B cell (primary cell): ENCODE measurements at regions of chr9 and their contacts with region 1.

Region 1: DNA sequence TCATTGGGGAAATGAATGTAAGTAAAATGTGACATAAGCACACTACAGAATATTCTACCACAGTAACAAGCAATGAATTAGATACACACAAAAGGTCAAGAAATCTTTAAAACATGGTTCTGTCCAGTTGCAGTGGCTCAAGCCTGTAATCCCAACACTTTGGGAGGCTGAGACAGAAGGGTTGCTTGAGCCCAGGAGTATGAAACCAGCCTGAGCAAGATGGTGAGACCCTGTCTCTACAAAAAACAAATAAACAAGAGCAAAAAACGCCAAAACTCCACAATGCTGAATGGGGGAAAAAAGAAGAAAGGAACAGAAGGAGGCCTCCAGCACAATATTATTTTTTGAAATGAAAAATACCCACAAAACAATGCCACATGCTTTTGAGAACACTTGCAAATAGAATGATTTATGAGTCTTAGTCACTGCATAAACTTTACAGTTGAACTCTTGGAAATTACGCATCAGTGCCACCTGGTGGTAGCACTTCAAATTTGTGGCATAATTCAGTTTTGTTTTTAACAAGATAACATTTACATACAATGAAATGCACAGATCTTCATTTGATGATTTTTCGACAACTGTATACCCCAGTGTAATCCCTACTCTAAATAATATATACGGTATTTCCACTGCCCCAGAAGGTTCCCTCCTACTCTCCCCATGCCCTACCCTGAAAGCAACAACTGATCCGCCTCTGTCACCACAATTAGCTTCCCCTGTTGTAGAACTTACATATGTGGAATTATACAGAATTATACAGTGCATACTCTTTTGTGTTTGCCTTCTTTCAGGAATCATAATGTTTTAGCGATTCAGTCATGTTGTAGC is 14.4 kb upstream of the SPINK4 start:
- DNase-seq: peak; percentile 82
- ATAC-seq: peak; percentile 44
- H3K4me3 ChIP-seq: no peak overlapping the region
- H3K4me3 Mint-ChIP-seq: no peak overlapping the region
- H3K27ac ChIP-seq: no peak overlapping the region
- H3K27ac Mint-ChIP-seq: no peak overlapping the region
- H3K4me1 ChIP-seq: peaks cover 35 to 46% of the 10 kb centered on the region in 2 donors
- H3K4me1 Mint-ChIP-seq: peaks cover 49% of the 10 kb centered on the region
- H3K27me3 ChIP-seq: no peaks in the 10 kb centered on the region
- H3K27me3 Mint-ChIP-seq: no peaks in the 10 kb centered on the region
- CTCF ChIP-seq: peak; percentile 86

Region 2: GRCh38 chr9:32579706-32580331 is 645.7 kb before region 1 on chr9:
- CTCF ChIA-PET with region 1: interaction called, 5 read pairs
- POLR2A ChIA-PET with region 1: no interaction called
- intact Hi-C with region 1: loop called (anchors 10 kb)
- DNase-seq: peak; percentile 78
- ATAC-seq: peak; percentile 71
- H3K4me3 ChIP-seq: no peak overlapping the region
- H3K4me3 Mint-ChIP-seq: no peak overlapping the region
- H3K27ac ChIP-seq: no peak overlapping the region
- H3K27ac Mint-ChIP-seq: no peak overlapping the region
- H3K4me1 ChIP-seq: no peaks in the 10 kb centered on the region
- H3K4me1 Mint-ChIP-seq: no peaks in the 10 kb centered on the region
- H3K27me3 ChIP-seq: peaks cover 0 to 9% (median 4%) of the 10 kb centered on the region in 4 experiments
- H3K27me3 Mint-ChIP-seq: peaks cover 35% of the 10 kb centered on the region
- CTCF ChIP-seq: peak; percentile 99

Region 3: GRCh38 chr9:33076358-33077004 is 149.1 kb before region 1 on chr9 and contains the start of gene SMU1:
- CTCF ChIA-PET with region 1: interaction called, 217 read pairs
- POLR2A ChIA-PET with region 1: interaction called, 5 read pairs
- intact Hi-C with region 1: loop called (anchors 1 kb)
- DNase-seq: peak; percentile 97
- ATAC-seq: peak; percentile 98
- H3K4me3 ChIP-seq: peak within 1 kb of the TSS; percentile 72 to 87 (median 84)
- H3K4me3 Mint-ChIP-seq: peak within 1 kb of the TSS; percentile 97
- H3K27ac ChIP-seq: peak within 1 kb of the TSS; percentile 91 to 95
- H3K27ac Mint-ChIP-seq: peak within 1 kb of the TSS; percentile 98
- H3K4me1 ChIP-seq: peaks cover 17 to 29% of the 10 kb centered on the region in 2 donors
- H3K4me1 Mint-ChIP-seq: peaks cover 34% of the 10 kb centered on the region
- H3K27me3 ChIP-seq: no peaks in the 10 kb centered on the region
- H3K27me3 Mint-ChIP-seq: no peaks in the 10 kb centered on the region
- CTCF ChIP-seq: no peak
- total RNA-seq, gene SMU1: 26.3 and 27.4 TPM in 2 replicates

Region 4: GRCh38 chr9:33116860-33117259 is 108.7 kb before region 1 on chr9:
- CTCF ChIA-PET with region 1: interaction called, 16 read pairs
- POLR2A ChIA-PET with region 1: no interaction called
- intact Hi-C with region 1: no loop called
- DNase-seq: peak; percentile 53
- ATAC-seq: peak; percentile 78
- H3K4me3 ChIP-seq: no peak overlapping the region
- H3K4me3 Mint-ChIP-seq: peak overlapping the region; percentile 76
- H3K27ac ChIP-seq: peak overlapping the region; percentile 69 to 84
- H3K27ac Mint-ChIP-seq: peak overlapping the region; percentile 96
- H3K4me1 ChIP-seq: peaks cover 33 to 43% of the 10 kb centered on the region in 2 donors
- H3K4me1 Mint-ChIP-seq: peaks cover 55% of the 10 kb centered on the region
- H3K27me3 ChIP-seq: no peaks in the 10 kb centered on the region
- H3K27me3 Mint-ChIP-seq: no peaks in the 10 kb centered on the region
- CTCF ChIP-seq: no peak

Region 5: DNA sequence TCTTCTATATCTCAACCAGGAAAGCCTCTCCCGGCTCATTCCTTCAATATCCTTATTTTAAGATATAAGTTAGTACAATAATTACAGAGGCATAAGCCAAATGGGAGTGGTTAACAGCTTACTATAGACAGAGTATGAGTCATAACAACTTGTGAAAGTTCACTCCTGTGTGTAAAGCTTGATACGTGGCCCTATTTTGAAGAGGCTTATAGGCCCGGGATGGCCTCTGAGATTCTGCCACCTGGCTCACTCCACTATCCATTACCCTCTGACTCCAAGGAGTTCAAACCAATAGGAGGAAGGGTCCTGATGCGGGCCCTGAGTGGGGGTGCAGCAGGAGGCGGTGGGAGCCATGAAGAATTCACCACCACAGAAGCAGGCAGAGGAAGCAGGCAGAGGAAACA is 95.0 kb before region 1 on chr9:
- CTCF ChIA-PET with region 1: interaction called, 47 read pairs
- POLR2A ChIA-PET with region 1: interaction called, 8 read pairs
- intact Hi-C with region 1: no loop called
- DNase-seq: no peak
- ATAC-seq: peak; percentile 32
- H3K4me3 ChIP-seq: peak overlapping the region in 1 of 5 experiments; percentile 17
- H3K4me3 Mint-ChIP-seq: peak overlapping the region; percentile 58
- H3K27ac ChIP-seq: peak overlapping the region; percentile 71 to 93
- H3K27ac Mint-ChIP-seq: peak overlapping the region; percentile 88
- H3K4me1 ChIP-seq: peaks cover 66 to 81% of the 10 kb centered on the region in 2 donors
- H3K4me1 Mint-ChIP-seq: peaks cover 92% of the 10 kb centered on the region
- H3K27me3 ChIP-seq: no peaks in the 10 kb centered on the region
- H3K27me3 Mint-ChIP-seq: no peaks in the 10 kb centered on the region
- CTCF ChIP-seq: no peak

Region 6: GRCh38 chr9:33167046-33167808 is 58.3 kb before region 1 on chr9 and contains the start of gene B4GALT1:
- CTCF ChIA-PET with region 1: interaction called, 33 read pairs
- POLR2A ChIA-PET with region 1: interaction called, 4 read pairs
- intact Hi-C with region 1: loop called (anchors 1 kb)
- DNase-seq: peak; percentile 96
- ATAC-seq: peak; percentile 77
- H3K4me3 ChIP-seq: peak within 1 kb of the TSS; percentile 95 to 99 (median 98)
- H3K4me3 Mint-ChIP-seq: peak within 1 kb of the TSS; percentile 99
- H3K27ac ChIP-seq: peak within 1 kb of the TSS; percentile 90 to 92
- H3K27ac Mint-ChIP-seq: peak within 1 kb of the TSS; percentile 100
- H3K4me1 ChIP-seq: peaks cover 46 to 59% of the 10 kb centered on the region in 2 donors
- H3K4me1 Mint-ChIP-seq: peaks cover 58% of the 10 kb centered on the region
- H3K27me3 ChIP-seq: no peaks in the 10 kb centered on the region
- H3K27me3 Mint-ChIP-seq: no peaks in the 10 kb centered on the region
- CTCF ChIP-seq: no peak
- total RNA-seq, gene B4GALT1: 197 and 201 TPM in 2 replicates

Region 7: DNA sequence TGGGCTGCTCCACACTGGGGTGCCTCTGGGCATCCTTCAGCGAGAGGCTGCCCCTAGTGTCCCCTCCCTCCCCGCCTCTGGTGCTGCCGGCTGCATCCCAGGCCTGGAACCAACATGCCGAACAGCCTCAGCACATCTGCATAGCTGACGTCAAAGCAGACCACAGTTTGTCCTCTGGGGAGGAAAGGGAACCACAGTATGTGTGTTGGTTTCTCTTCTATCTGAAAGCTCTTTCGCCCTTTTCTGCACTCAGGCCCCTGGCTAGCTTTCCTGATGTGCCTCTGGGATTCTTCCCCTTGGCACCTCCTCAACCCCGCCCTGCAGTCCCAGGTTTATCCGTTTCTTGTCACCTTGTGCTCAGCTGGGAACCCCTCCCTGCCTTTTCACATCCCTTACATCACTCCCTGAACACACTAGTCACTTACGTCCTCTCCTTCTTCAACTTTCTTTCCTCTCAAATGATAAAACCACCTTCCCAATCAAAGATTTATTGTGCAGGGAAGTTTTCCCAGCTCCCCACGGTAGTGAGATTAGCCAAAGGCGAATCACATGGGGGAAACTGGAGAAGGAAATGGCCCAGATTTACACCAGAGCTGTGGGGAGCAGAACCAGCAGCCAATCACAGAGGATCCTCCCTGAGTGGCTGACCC is 22.9 kb before region 1 on chr9:
- CTCF ChIA-PET with region 1: interaction called, 28 read pairs
- POLR2A ChIA-PET with region 1: interaction called, 3 read pairs
- intact Hi-C with region 1: loop called (anchors 1 kb)
- DNase-seq: peak; percentile 91
- ATAC-seq: peak; percentile 99
- H3K4me3 ChIP-seq: peak overlapping the region in 1 of 5 experiments; percentile 4
- H3K4me3 Mint-ChIP-seq: peak overlapping the region; percentile 86
- H3K27ac ChIP-seq: peak overlapping the region in 1 of 2 donors; percentile 39
- H3K27ac Mint-ChIP-seq: peak overlapping the region; percentile 87
- H3K4me1 ChIP-seq: peaks cover 14 to 16% of the 10 kb centered on the region in 2 donors
- H3K4me1 Mint-ChIP-seq: peaks cover 20% of the 10 kb centered on the region
- H3K27me3 ChIP-seq: no peaks in the 10 kb centered on the region
- H3K27me3 Mint-ChIP-seq: no peaks in the 10 kb centered on the region
- CTCF ChIP-seq: no peak

Region 8: GRCh38 chr9:33329117-33329563 is 103.6 kb after region 1 on chr9:
- CTCF ChIA-PET with region 1: no interaction called
- POLR2A ChIA-PET with region 1: no interaction called
- intact Hi-C with region 1: no loop called
- DNase-seq: no peak
- ATAC-seq: no peak
- H3K4me3 ChIP-seq: no peak overlapping the region
- H3K4me3 Mint-ChIP-seq: no peak overlapping the region
- H3K27ac ChIP-seq: no peak overlapping the region
- H3K27ac Mint-ChIP-seq: peak overlapping the region; percentile 28
- H3K4me1 ChIP-seq: no peaks in the 10 kb centered on the region
- H3K4me1 Mint-ChIP-seq: no peaks in the 10 kb centered on the region
- H3K27me3 ChIP-seq: no peaks in the 10 kb centered on the region
- H3K27me3 Mint-ChIP-seq: no peaks in the 10 kb centered on the region
- CTCF ChIP-seq: no peak